ENCODE measurements at regions of chr11 and their contacts with region 1.

Region 1: DNA sequence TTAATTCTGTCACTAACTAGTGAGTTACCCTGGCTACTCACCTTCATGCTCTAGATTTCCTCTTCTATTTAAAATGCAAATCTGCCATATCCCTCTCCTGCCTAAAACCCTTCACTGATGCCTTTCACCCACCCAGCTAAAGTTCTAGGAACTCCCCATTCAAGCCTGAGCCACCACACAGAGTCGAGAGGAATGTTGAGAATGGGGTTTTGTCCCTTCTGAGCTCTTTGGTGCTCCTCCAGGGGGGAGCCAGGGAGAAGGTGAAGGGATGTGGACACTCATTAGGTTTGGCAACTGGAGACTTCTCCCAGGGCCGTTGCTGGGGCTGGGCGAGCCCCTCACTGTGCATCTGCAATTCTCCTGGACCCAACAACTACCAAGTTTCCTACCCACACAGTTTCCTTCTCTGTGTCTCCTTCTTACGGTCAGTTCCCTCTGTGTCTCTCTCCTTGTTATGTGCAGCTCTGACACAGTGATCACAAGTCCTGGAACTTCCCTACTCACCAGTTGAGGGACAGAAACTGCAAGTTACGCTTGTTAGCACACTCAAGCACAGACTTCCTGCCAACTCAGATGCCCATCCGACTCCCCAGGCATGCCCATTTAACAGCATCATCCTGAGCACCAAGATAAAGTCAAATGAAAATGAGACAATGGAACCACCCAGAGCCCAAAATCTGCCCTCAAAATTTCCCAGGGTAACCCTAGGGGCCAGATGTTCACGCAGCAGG is 6.5 kb upstream of the IL10RA start:
- DNase-seq: no peak
- ATAC-seq: peak; percentile 45 to 67
- H3K4me3 Mint-ChIP-seq: peak overlapping the region; percentile 2 to 67 (median 41)
- H3K27ac Mint-ChIP-seq: peak overlapping the region; percentile 24 to 91 (median 74)
- H3K4me1 Mint-ChIP-seq: peaks cover 38 to 87% (median 69%) of the 10 kb centered on the region in 4 donors
- H3K27me3 Mint-ChIP-seq: no peaks in the 10 kb centered on the region

Region 2: GRCh38 chr11:117876341-117877119 is 103.1 kb before region 1 on chr11 and contains the start of gene FXYD6:
- POLR2A ChIA-PET with region 1: no interaction called
- DNase-seq: peak in 4 of 10 donors; percentile 11 to 24 (median 15)
- ATAC-seq: peak; percentile 34 to 56
- H3K4me3 Mint-ChIP-seq: peak within 1 kb of the TSS; percentile 77 to 97 (median 88)
- H3K27ac Mint-ChIP-seq: peak within 1 kb of the TSS in 8 of 10 donors; percentile 18 to 88 (median 76)
- H3K4me1 Mint-ChIP-seq: peaks cover 21 to 42% (median 34%) of the 10 kb centered on the region in 4 donors
- H3K27me3 Mint-ChIP-seq: peaks cover 41 to 83% (median 67%) of the 10 kb centered on the region in 5 donors
- polyA plus RNA-seq, gene FXYD6: not detected

Region 3: DNA sequence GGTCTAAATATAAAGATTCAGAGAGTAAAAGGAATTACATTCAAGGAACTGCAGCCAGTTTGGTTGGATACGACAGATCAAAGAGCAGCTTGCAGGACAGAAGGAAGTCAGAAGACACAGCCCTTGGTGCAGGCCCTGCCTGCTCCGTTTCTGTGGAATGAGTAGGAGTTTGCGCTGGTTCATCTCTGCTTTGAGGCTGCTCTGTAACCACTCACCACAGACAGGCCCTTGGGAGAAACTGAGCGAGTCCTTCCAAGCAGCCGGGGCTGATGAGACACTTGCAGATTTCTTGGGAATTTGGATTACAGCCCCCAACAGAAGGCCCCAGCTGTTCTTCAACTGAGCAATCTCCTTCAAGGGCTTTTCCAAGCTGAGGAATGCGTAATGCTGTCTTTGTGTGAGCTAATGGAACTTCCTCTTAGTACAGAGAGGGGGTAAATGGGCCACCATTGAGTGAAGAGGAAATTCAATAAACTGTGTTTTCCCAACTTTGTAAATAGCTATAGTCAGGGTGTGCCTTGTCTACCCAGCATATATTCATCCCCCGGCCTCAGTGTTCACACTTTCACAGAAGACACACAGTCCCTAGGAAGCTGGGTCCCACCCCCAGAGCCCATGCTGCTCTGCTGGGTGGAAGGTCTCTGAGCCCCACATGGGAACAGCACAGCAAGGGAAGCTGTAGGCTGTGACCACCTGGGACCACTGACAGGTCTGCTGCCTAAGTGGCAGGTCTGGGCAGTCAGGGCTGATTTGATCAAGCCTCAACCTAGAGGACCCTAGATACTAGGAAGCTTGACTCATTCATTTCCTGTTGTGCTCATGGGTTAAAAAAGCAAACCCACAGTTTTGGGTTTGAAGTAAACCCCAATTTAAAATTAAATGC is 23.1 kb after region 1 on chr11:
- POLR2A ChIA-PET with region 1: interaction called, 721 read pairs
- DNase-seq: peak in 1 of 10 donors; percentile 22
- ATAC-seq: peak; percentile 16 to 61
- H3K4me3 Mint-ChIP-seq: peak overlapping the region; percentile 49 to 83 (median 66)
- H3K27ac Mint-ChIP-seq: peak overlapping the region; percentile 84 to 100 (median 92)
- H3K4me1 Mint-ChIP-seq: peaks cover 64 to 96% (median 92%) of the 10 kb centered on the region in 4 donors
- H3K27me3 Mint-ChIP-seq: no peaks in the 10 kb centered on the region

Measured in naive thymus-derived CD8-positive, alpha-beta T cell (primary cell).